ENCODE measurements at regions of chr4 and their contacts with region 1.

Region 1: GRCh38 chr4:177093964-177094363 is 215.7 kb upstream of the NEIL3 start:
- DNase-seq: no peak
- ATAC-seq: no peak
- H3K4me3 ChIP-seq: no peak overlapping the region
- H3K27ac ChIP-seq: no peak overlapping the region
- H3K4me1 ChIP-seq: 0 out of 2 replicates have a peak, but pooled peaks cover 2% of the 10 kb centered on the region
- H3K27me3 ChIP-seq: no peaks in the 10 kb centered on the region
- CTCF ChIP-seq: no peak
- POLR2A ChIP-seq: no peak
- RAD21 ChIP-seq: no peak

Region 2: DNA sequence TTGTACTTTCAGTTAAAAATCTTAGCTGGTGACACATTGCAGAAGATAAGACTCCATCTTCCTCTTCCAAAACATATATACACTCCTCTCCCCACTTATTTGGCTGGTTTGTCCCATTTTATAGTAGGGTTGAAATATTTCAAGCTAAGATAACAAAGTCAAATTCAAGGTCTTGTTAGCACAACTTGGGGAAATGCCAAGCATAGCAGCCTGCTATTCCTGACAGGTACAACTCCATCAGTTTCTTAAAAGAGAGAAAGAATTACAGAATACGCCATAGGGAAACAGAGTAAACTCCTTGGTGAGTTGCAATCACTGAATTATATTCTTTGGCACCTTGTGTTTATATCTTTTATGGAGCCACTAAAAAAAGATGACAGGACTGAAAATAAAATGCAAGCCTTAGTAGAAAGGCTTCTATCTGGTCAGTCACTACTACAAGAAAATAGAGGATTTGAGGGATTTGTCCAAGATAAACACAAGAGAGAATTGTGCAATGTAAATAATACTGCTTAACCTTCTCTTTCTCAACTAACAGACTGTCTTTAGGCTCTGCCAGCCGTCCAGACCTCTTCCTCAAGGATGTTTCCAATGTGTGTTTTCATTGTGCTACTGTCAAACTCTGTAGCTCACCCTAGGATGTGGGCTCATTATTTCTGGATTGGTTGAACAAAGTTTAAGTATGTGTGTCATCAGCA is 471.6 kb before region 1 on chr4:
- CTCF ChIA-PET with region 1: no interaction called
- POLR2A ChIA-PET with region 1: no interaction called
- dilution Hi-C with region 1: no loop called
- in situ Hi-C with region 1: no loop called
- intact Hi-C with region 1: no loop called
- DNase-seq: peak; percentile 81
- ATAC-seq: peak; percentile 84
- H3K4me3 ChIP-seq: no peak overlapping the region
- H3K27ac ChIP-seq: no peak overlapping the region
- H3K4me1 ChIP-seq: peaks cover 2% of the 10 kb centered on the region
- H3K27me3 ChIP-seq: no peaks in the 10 kb centered on the region; the same call in 1 of the 2 replicates
- CTCF ChIP-seq: no peak
- POLR2A ChIP-seq: no peak
- RAD21 ChIP-seq: no peak

Region 3: GRCh38 chr4:177079327-177079726 is 14.6 kb before region 1 on chr4:
- CTCF ChIA-PET with region 1: no interaction called
- POLR2A ChIA-PET with region 1: no interaction called
- dilution Hi-C with region 1: no loop called
- in situ Hi-C with region 1: no loop called
- intact Hi-C with region 1: loop called (anchors 2 kb)
- DNase-seq: no peak
- ATAC-seq: no peak
- H3K4me3 ChIP-seq: no peak overlapping the region
- H3K27ac ChIP-seq: no peak overlapping the region
- H3K4me1 ChIP-seq: no peaks in the 10 kb centered on the region
- H3K27me3 ChIP-seq: no peaks in the 10 kb centered on the region
- CTCF ChIP-seq: no peak
- POLR2A ChIP-seq: no peak
- RAD21 ChIP-seq: no peak

Measured in IMR-90 (cell line).